ENCODE measurements at regions of chr1 and their contacts with region 1.

Region 1: DNA sequence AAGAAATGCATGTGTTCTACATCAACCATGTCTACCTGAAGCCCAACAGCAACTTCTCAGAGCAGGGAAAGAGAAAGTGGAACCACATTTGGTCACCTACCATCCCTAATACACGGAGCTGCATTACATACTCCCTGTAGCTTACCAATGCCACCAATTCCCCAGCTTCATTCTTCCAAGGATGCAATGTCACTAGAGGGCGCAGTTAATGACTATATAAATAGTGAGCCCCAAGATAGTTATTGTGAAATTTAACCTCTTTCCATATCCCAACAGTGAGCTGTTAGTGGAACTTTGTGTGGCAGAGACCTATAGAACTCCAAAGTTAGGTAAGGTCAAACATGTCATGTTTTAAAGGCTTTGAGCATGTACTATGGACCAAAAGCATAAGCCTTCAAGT is 618.3 kb downstream of the SMYD3 start:
- DNase-seq: no peak
- CTCF ChIP-seq: peak; percentile 36

Region 2: GRCh38 chr1:245901037-245901436 is 12.2 kb after region 1 on chr1:
- CTCF ChIA-PET with region 1: interaction called, 35 read pairs
- POLR2A ChIA-PET with region 1: no interaction called
- DNase-seq: no peak
- CTCF ChIP-seq: no peak

Region 3: GRCh38 chr1:246002725-246003441 is 114.1 kb after region 1 on chr1:
- CTCF ChIA-PET with region 1: interaction called, 14 read pairs
- POLR2A ChIA-PET with region 1: no interaction called
- DNase-seq: peak; percentile 80
- CTCF ChIP-seq: peak; percentile 84